ENCODE measurements at regions of chr1 and their contacts with region 1.

Region 1: GRCh38 chr1:205669341-205670149 is 10.8 kb downstream of the SLC45A3 start:
- DNase-seq: no peak
- ATAC-seq: no peak
- H3K4me3 ChIP-seq: no peak overlapping the region
- H3K27ac ChIP-seq: no peak overlapping the region
- H3K4me1 ChIP-seq: peaks cover 45% of the 10 kb centered on the region
- H3K27me3 ChIP-seq: no peaks in the 10 kb centered on the region
- CTCF ChIP-seq: no peak

Region 2: DNA sequence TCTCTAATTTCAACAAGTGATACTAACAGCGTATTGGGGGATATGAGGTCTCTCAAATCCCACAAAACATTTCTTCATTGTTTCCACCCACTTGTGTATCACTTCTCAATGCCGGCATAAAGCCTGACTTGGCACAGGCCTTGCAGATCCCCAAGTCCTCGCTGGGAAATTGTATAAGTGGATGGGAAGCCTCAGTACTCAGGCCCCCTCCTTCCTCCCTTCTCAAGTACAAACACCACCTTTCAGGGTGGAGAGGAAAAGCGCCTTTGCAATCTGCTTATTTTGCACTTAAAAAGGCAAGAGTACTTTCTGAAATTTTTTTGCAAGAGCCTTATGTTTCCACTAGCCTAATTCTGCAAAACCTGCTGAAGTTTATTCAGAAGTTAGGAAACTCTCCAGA is 287.0 kb before region 1 on chr1:
- CTCF ChIA-PET with region 1: no interaction called
- POLR2A ChIA-PET with region 1: no interaction called
- in situ Hi-C with region 1: no loop called
- intact Hi-C with region 1: no loop called
- DNase-seq: no peak
- ATAC-seq: no peak
- H3K4me3 ChIP-seq: no peak overlapping the region
- H3K27ac ChIP-seq: no peak overlapping the region
- H3K4me1 ChIP-seq: no peaks in the 10 kb centered on the region
- H3K27me3 ChIP-seq: no peaks in the 10 kb centered on the region
- CTCF ChIP-seq: no peak

Region 3: DNA sequence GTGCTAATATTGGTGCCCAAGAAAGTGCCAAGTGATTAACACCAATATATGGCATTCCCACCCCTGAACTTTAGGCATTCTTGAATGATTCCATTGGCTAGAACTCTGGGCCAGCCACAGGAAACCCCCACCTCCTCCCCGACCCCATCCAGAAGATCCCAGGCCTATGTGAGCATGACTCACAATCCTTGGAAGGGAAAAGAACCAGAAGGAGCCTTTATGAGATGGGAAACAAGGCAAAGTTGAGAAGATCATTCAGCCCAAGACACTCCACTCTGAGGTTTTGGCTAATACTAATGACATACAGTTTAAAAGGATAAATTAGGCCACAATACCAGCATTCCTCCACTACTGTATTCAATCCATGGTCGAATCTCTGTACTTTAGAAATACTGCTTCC is 59.5 kb before region 1 on chr1:
- CTCF ChIA-PET with region 1: no interaction called
- POLR2A ChIA-PET with region 1: no interaction called
- in situ Hi-C with region 1: no loop called
- intact Hi-C with region 1: no loop called
- DNase-seq: no peak
- ATAC-seq: no peak
- H3K4me3 ChIP-seq: no peak overlapping the region
- H3K27ac ChIP-seq: no peak overlapping the region
- H3K4me1 ChIP-seq: 0 out of 2 replicates have a peak, but pooled peaks cover 6% of the 10 kb centered on the region
- H3K27me3 ChIP-seq: no peaks in the 10 kb centered on the region
- CTCF ChIP-seq: no peak

Region 4: DNA sequence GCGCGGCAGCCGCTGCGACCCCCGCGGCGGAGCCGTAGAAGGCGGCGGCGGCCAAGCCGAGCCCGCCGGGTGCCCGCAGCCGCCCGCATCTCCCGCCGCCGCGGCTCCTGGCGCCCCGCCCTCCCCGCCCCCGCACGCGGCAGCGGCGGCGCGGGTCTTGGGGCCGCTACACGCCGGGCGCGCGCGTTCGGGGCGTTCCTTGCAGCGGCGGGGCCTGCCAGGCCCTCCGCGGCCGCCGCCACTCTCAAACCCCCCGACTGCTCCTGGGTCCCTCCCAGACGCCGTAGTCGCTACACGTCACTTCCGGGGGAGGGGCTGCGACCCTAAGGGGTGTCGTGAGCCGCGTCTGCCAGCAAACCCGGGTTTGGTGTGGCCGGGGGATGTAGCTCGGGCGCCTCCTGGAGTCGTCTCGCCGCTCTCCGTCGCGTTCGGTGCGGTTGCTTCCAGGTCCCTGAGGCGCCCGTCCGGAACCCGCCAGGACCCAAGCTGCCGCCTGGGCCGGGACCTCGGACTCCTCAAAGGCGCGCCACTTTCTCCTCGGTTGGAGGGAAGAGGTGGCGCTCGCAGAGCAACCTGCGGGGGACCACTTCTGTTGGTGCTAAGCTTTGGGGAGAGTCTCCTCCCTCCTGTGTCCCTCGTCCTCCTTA is 37.7 kb before region 1 on chr1 and contains the start of gene ELK4:
- CTCF ChIA-PET with region 1: no interaction called
- POLR2A ChIA-PET with region 1: no interaction called
- in situ Hi-C with region 1: no loop called
- intact Hi-C with region 1: no loop called
- DNase-seq: peak; percentile 84
- ATAC-seq: peak; percentile 98
- H3K4me3 ChIP-seq: peak within 1 kb of the TSS; percentile 84 to 94
- H3K27ac ChIP-seq: peak within 1 kb of the TSS; percentile 95
- H3K4me1 ChIP-seq: peaks cover 18% of the 10 kb centered on the region
- H3K27me3 ChIP-seq: no peaks in the 10 kb centered on the region
- CTCF ChIP-seq: peak; percentile 88
- total RNA-seq, gene ELK4: 54.6 TPM

Region 5: GRCh38 chr1:205711104-205712020 is 41.8 kb after region 1 on chr1:
- CTCF ChIA-PET with region 1: interaction called, 8 read pairs
- POLR2A ChIA-PET with region 1: interaction called, 3 read pairs
- in situ Hi-C with region 1: no loop called
- intact Hi-C with region 1: loop called (anchors 5 kb)
- DNase-seq: peak; percentile 70
- ATAC-seq: peak; percentile 89
- H3K4me3 ChIP-seq: no peak overlapping the region
- H3K27ac ChIP-seq: peak overlapping the region; percentile 23; the same call in 1 of the 2 replicates
- H3K4me1 ChIP-seq: peaks cover 6% of the 10 kb centered on the region; the same call in 1 of the 2 replicates
- H3K27me3 ChIP-seq: no peaks in the 10 kb centered on the region
- CTCF ChIP-seq: peak; percentile 87

Region 6: DNA sequence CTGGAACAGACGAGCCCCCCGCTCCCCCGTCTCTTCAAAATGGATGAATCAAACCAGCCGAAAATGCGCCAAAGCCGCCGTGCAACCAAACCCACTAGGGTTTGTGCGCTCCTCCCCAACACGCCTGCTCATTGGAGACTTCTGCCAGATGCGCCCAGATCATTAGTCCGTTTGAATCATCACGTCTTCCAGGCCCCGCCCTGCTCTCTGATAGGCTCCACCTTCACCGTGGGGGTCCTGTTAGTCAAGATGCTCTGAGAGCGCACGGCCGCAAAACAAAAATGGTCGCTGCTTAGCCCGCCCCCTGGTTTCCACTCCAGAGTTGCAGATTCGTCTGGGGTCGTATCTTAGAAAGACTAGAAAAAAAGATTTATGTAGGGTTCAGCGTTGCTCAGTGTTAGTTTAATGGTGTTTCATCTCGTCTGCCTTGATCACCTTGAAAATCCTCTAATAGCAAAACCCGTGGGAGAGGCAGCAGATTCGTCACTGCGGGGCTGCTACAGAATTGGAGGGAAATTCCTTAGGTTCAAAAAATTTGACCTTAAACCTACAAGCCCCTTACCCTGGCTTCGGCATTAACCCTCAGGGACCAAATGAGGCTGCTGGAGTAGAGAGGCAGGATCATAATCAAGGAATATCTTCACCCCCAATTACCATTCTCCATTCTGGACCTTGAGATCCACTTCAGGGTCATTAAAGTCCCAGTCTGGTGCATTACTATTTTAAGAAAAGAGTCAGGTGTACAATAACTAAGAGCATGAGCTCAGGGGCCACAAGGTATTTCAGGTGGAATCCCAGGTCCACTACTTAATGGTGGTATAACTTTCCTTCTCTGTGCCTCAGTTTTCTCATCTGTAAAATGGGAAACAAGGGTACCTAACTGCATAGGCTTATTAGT is 80.8 kb after region 1 on chr1 and contains the start of gene NUCKS1:
- CTCF ChIA-PET with region 1: no interaction called
- POLR2A ChIA-PET with region 1: no interaction called
- in situ Hi-C with region 1: no loop called
- intact Hi-C with region 1: no loop called
- DNase-seq: peak; percentile 82
- ATAC-seq: peak; percentile 90
- H3K4me3 ChIP-seq: peak within 1 kb of the TSS; percentile 88 to 98
- H3K27ac ChIP-seq: peak within 1 kb of the TSS; percentile 98
- H3K4me1 ChIP-seq: peaks cover 22% of the 10 kb centered on the region
- H3K27me3 ChIP-seq: no peaks in the 10 kb centered on the region
- CTCF ChIP-seq: no peak
- total RNA-seq, gene NUCKS1: 210 TPM

Region 7: GRCh38 chr1:205896320-205896719 is 226.8 kb after region 1 on chr1:
- CTCF ChIA-PET with region 1: interaction called, 11 read pairs
- POLR2A ChIA-PET with region 1: no interaction called
- in situ Hi-C with region 1: no loop called
- intact Hi-C with region 1: no loop called
- DNase-seq: no peak
- ATAC-seq: no peak
- H3K4me3 ChIP-seq: no peak overlapping the region
- H3K27ac ChIP-seq: no peak overlapping the region
- H3K4me1 ChIP-seq: no peaks in the 10 kb centered on the region
- H3K27me3 ChIP-seq: no peaks in the 10 kb centered on the region
- CTCF ChIP-seq: no peak